A549 (cell line): ENCODE measurements at regions of chr5 and their contacts with region 1.

Region 1: GRCh38 chr5:120803282-120803681 is 339.2 kb downstream of the PRR16 start:
- DNase-seq: no peak
- ATAC-seq: no peak
- H3K4me3 ChIP-seq: no peak overlapping the region
- H3K27ac ChIP-seq: no peak overlapping the region
- H3K4me1 ChIP-seq: no peaks in the 10 kb centered on the region
- CTCF ChIP-seq: peak; percentile 30; the same call in 2 of the 3 replicates
- EP300 ChIP-seq: no peak
- POLR2A ChIP-seq: no peak
- RAD21 ChIP-seq: peak in 1 of 2 experiments; percentile 43; a peak in 2 of 5 replicates

Region 2: DNA sequence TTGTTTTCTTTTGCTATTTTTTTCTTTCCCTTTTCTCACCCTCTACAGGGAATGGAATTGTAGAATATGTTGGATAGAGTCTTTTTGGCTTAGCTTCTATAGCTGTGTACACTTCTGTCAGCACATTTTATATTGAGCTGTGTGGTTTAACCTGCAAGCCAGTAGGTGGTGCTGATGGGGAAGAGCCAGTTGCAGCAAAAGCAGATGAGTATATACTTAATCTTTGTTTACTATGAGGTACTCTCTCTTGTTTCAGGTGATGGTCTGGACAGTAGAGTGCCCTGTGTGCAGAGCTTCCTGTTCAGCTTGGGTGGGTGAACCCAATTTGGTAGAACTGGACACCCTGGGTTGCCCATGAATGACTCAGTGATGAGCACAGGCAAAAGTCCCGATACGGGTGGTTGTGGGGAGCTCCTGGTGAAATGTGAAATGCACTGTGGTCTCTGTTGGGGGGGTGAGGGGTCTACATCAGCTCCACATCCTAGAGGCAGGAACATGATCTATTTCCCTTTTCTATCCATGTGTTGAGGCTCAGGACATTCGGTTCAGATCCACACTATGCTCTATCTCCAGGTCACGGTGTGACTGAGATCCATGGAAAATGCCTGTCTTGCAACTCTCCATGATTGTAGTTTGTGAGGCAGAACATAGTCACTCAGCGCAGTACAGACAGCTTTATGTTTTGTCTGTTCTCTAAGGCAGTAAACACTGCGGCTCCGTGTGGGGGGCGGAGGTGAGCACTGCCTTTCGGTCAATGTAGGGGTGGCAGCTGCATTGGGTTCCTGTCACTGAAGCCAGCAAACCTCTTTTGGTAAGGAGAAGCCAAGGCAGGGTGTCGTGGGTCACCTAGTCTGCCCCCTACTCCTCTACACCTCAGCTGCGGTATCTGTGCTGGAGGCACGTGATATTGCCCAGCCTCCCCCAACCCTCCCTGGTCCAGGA is 14.0 kb after region 1 on chr5:
- CTCF ChIA-PET with region 1: interaction called, 13 read pairs
- POLR2A ChIA-PET with region 1: no interaction called
- DNase-seq: peak in 1 of 2 experiments; percentile 9
- ATAC-seq: 0 out of 6 replicates have a peak, but pooled peaks of 1 of the 2 experiments have one; percentile 42
- H3K4me3 ChIP-seq: no peak overlapping the region
- H3K27ac ChIP-seq: no peak overlapping the region
- H3K4me1 ChIP-seq: no peaks in the 10 kb centered on the region
- CTCF ChIP-seq: no peak
- EP300 ChIP-seq: no peak
- POLR2A ChIP-seq: no peak
- RAD21 ChIP-seq: peak in 1 of 2 experiments; percentile 32; a peak in 2 of 5 replicates

Region 3: GRCh38 chr5:120886351-120886860 is 83.1 kb after region 1 on chr5:
- CTCF ChIA-PET with region 1: no interaction called
- POLR2A ChIA-PET with region 1: no interaction called
- DNase-seq: no peak
- ATAC-seq: no peak
- H3K4me3 ChIP-seq: no peak overlapping the region
- H3K27ac ChIP-seq: no peak overlapping the region
- H3K4me1 ChIP-seq: no peaks in the 10 kb centered on the region
- CTCF ChIP-seq: no peak
- EP300 ChIP-seq: no peak
- POLR2A ChIP-seq: no peak
- RAD21 ChIP-seq: no peak